ENCODE measurements at regions of chr1 and their contacts with region 1.

Region 1: GRCh38 chr1:156385534-156386031 is 16.6 kb downstream of the RHBG start:
- DNase-seq: no peak
- H3K4me3 ChIP-seq: no peak overlapping the region
- H3K27ac ChIP-seq: no peak overlapping the region
- H3K4me1 ChIP-seq: no peaks in the 10 kb centered on the region
- H3K27me3 ChIP-seq: no peaks in the 10 kb centered on the region
- CTCF ChIP-seq: peak; percentile 79 to 91 (median 86)

Region 2: GRCh38 chr1:156445789-156446263 is 60.2 kb after region 1 on chr1:
- intact Hi-C with region 1: loop called (anchors 1 kb)
- DNase-seq: peak in 1 of 2 donors; percentile 88
- H3K4me3 ChIP-seq: no peak overlapping the region
- H3K27ac ChIP-seq: no peak overlapping the region
- H3K4me1 ChIP-seq: no peaks in the 10 kb centered on the region
- H3K27me3 ChIP-seq: no peaks in the 10 kb centered on the region
- CTCF ChIP-seq: peak; percentile 91 to 95 (median 93)

Region 3: DNA sequence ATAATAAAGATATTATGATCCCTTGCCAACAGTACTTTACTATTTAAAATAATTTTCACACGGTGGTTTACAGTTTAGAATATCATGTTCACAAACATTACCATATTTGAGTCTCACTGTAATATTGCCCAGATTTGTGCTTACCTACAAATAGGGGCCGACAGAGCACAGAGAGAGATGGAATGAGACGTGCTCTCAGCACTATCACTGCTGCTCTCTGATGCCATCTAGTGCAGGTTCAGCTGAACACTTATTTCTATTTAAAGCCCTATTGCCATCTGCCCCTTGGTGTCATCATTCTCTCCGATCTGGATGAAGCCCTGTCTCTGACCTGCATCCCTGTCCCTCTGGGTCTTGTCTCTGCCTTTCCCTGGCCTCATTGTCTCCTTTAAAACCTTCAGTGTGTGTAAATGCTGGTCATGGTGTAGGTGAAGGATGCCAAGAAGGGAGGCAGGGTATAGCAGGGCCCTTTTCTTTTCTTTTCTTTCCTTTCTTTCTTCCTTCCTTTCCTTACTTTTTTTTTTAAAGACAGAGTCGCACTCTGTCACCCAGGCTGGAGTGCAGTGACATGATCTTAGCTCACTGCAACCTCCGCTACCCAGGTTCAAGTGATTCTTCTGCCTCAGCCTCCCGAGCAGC is 222.6 kb after region 1 on chr1:
- intact Hi-C with region 1: loop called (anchors 2 kb)
- DNase-seq: no peak
- H3K4me3 ChIP-seq: peak overlapping the region in 1 of 2 donors; percentile 15
- H3K27ac ChIP-seq: no peak overlapping the region
- H3K4me1 ChIP-seq: no peaks in the 10 kb centered on the region
- H3K27me3 ChIP-seq: no peaks in the 10 kb centered on the region
- CTCF ChIP-seq: peak; percentile 80 to 86 (median 82)